ENCODE measurements at regions of chr5 and their contacts with region 1.

Region 1: GRCh38 chr5:55344392-55344992 is 36.7 kb downstream of the MTREX start:
- DNase-seq: no peak
- ATAC-seq: peak; percentile 68; the same call in 2 of the 3 replicates
- H3K4me3 ChIP-seq: no peak overlapping the region
- H3K27ac ChIP-seq: no peak overlapping the region
- H3K4me1 ChIP-seq: no peaks in the 10 kb centered on the region
- H3K27me3 ChIP-seq: no peaks in the 10 kb centered on the region
- CTCF ChIP-seq: peak; percentile 67 to 75 (median 74)
- EP300 ChIP-seq: no peak
- POLR2A ChIP-seq: no peak
- RAD21 ChIP-seq: peak; percentile 72

Region 2: DNA sequence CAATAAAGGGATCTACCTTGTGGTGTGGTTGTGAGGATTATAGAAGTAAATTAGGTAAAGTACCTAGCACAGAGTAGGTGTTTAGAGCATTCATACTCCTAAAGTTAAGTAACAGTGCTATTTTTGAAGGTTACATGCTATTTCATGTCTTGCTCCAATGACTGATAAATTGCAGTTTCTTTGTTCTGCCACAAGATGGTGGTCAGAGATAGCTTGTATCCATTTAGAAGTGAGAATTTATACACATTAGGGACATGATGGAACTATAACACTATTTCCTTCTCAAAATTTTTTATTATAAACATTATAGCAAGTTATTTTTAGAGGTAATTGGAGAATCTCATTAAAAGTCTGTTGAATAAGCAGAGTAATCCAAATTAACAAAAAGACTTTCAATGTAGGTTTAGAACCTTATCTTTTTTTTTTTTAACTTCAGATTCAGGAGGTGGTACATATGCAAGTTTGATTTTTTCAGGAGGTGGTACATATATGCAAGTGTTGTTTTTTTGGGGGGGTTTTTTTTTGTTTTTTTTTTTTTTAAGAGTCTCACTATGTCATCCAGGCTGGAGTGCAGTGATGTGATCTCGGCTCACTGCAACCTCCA is 19.6 kb before region 1 on chr5:
- CTCF ChIA-PET with region 1: no interaction called
- POLR2A ChIA-PET with region 1: no interaction called
- RAD21 ChIA-PET with region 1: no interaction called
- SMC1A ChIA-PET with region 1: no interaction called
- in situ Hi-C with region 1: no loop called
- intact Hi-C with region 1: no loop called
- DNase-seq: no peak
- ATAC-seq: peak; percentile 84
- H3K4me3 ChIP-seq: no peak overlapping the region
- H3K27ac ChIP-seq: no peak overlapping the region
- H3K4me1 ChIP-seq: no peaks in the 10 kb centered on the region
- H3K27me3 ChIP-seq: no peaks in the 10 kb centered on the region
- CTCF ChIP-seq: peak; percentile 48 to 79 (median 53); a peak in 5 of 6 replicates
- EP300 ChIP-seq: no peak
- POLR2A ChIP-seq: no peak
- RAD21 ChIP-seq: peak; percentile 79

Region 3: GRCh38 chr5:55534436-55535198 is 190.1 kb after region 1 on chr5 and contains the start of gene PLPP1:
- CTCF ChIA-PET with region 1: no interaction called
- POLR2A ChIA-PET with region 1: no interaction called
- RAD21 ChIA-PET with region 1: no interaction called
- SMC1A ChIA-PET with region 1: no interaction called
- in situ Hi-C with region 1: no loop called
- intact Hi-C with region 1: loop called (anchors 10 kb)
- DNase-seq: peak; percentile 38
- ATAC-seq: peak; percentile 89
- H3K4me3 ChIP-seq: peak within 1 kb of the TSS; percentile 80
- H3K27ac ChIP-seq: peak within 1 kb of the TSS; percentile 66
- H3K4me1 ChIP-seq: peaks cover 12% of the 10 kb centered on the region
- H3K27me3 ChIP-seq: no peaks in the 10 kb centered on the region
- CTCF ChIP-seq: no peak
- EP300 ChIP-seq: no peak
- POLR2A ChIP-seq: peak; percentile 78
- RAD21 ChIP-seq: no peak
- polyA plus RNA-seq, gene PLPP1: 3.0 TPM

Region 4: DNA sequence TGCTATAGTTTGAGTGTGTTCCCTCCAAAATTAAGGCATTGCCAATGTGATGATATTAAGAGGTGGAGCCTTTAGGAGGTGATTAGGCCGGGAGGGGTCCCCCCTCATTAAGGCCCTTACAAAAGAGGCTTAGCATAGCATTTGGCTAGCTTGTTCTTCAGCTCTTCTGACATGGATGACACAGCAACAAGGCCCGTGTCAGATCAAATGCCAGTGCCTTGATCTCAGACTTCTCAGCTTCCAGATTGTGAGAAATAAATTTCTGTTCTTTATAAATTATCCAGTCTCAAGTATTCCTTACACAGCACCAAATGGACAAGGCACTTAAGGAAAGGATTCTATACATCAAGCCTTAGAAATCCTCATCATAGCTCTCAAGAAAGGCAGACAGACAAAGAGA is 335.9 kb after region 1 on chr5:
- CTCF ChIA-PET with region 1: no interaction called
- POLR2A ChIA-PET with region 1: no interaction called
- RAD21 ChIA-PET with region 1: no interaction called
- SMC1A ChIA-PET with region 1: interaction called, 3 read pairs
- in situ Hi-C with region 1: loop called (anchors 10 kb)
- intact Hi-C with region 1: no loop called
- DNase-seq: no peak
- ATAC-seq: no peak
- H3K4me3 ChIP-seq: no peak overlapping the region
- H3K27ac ChIP-seq: no peak overlapping the region
- H3K4me1 ChIP-seq: no peaks in the 10 kb centered on the region
- H3K27me3 ChIP-seq: no peaks in the 10 kb centered on the region
- CTCF ChIP-seq: no peak
- EP300 ChIP-seq: no peak
- POLR2A ChIP-seq: no peak
- RAD21 ChIP-seq: no peak

Measured in GM12878 (cell line).